Psoas muscle (tissue), 8 donors: ENCODE measurements at regions of chr1 and their contacts with region 1.

Region 1: DNA sequence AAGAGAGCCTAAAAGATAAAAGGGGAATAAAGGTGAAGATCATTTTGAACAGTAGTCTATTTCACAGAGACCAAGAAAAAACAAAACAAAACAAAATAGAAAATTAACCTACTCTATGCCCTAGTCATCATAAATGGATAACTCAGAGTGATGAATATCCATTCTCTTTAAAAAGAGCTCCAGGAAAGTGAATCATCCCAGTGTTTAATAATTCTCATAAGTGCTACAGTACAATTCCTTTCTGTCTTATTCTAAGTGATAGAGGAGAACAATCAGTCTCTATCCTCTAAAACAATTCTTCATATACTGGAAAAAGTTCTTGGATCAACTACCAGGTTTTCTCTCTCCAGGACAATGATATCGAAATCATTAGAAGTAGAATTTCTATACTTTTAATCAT is 45.8 kb downstream of the GDAP2 start:
- DNase-seq: no peak
- ATAC-seq: no peak
- H3K4me3 ChIP-seq: no peak overlapping the region
- H3K27ac ChIP-seq: no peak overlapping the region
- H3K4me1 ChIP-seq: no peaks in the 10 kb centered on the region
- H3K27me3 ChIP-seq: no peaks in the 10 kb centered on the region
- CTCF ChIP-seq: no peak

Region 2: GRCh38 chr1:117871013-117871412 is 12.6 kb before region 1 on chr1:
- intact Hi-C with region 1: no loop called
- DNase-seq: no peak
- ATAC-seq: no peak
- H3K4me3 ChIP-seq: no peak overlapping the region
- H3K27ac ChIP-seq: no peak overlapping the region
- H3K4me1 ChIP-seq: no peaks in the 10 kb centered on the region
- H3K27me3 ChIP-seq: no peaks in the 10 kb centered on the region
- CTCF ChIP-seq: no peak

Region 3: GRCh38 chr1:117929990-117930447 is 46.4 kb after region 1 on chr1:
- intact Hi-C with region 1: loop called in 1 of 2 experiments (anchors 5 kb)
- DNase-seq: no peak
- ATAC-seq: peak in 2 of 4 donors; percentile 35
- H3K4me3 ChIP-seq: peak overlapping the region; percentile 84
- H3K27ac ChIP-seq: peak overlapping the region; percentile 91
- H3K4me1 ChIP-seq: peaks cover 38% of the 10 kb centered on the region
- H3K27me3 ChIP-seq: no peaks in the 10 kb centered on the region
- CTCF ChIP-seq: no peak